HepG2 (cell line): ENCODE measurements at regions of chr12 and their contacts with region 1.

Region 1: DNA sequence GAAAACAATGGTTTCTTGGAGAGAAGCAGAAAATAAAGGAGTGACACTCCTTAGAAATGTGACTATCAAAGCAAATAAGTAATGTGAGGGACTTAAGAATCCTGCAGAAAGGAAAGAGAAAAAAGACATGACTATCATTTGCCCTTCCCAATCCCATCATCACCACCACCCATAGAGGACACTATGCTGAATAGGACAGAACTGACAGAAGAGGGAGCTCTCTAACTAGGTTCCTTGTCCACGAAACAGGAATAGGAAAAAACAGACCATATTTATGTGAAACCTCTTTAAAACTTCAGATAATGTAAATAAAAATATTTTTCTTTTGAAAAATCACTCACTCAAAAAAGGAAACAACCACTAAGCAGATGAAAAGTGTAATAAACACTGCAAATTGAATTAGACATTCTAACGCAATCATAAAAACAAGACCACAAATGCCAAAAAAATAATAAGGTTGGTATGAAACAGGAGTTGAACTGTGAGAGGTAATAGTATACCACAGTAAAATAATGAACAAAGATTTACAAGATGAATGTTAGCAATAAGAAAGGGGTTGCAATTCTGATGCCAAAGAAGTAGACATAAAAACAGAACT is 24.1 kb downstream of the KLRD1 start:
- DNase-seq: peak; percentile 49
- ATAC-seq: peak; percentile 82
- H3K4me3 ChIP-seq: no peak overlapping the region
- H3K27ac ChIP-seq: no peak overlapping the region
- H3K4me1 ChIP-seq: no peaks in the 10 kb centered on the region
- H3K27me3 ChIP-seq: no peaks in the 10 kb centered on the region
- CTCF ChIP-seq: peak; percentile 76
- EP300 ChIP-seq: no peak
- POLR2A ChIP-seq: no peak
- RAD21 ChIP-seq: peak; percentile 53; the same call in 1 of the 2 replicates

Region 2: DNA sequence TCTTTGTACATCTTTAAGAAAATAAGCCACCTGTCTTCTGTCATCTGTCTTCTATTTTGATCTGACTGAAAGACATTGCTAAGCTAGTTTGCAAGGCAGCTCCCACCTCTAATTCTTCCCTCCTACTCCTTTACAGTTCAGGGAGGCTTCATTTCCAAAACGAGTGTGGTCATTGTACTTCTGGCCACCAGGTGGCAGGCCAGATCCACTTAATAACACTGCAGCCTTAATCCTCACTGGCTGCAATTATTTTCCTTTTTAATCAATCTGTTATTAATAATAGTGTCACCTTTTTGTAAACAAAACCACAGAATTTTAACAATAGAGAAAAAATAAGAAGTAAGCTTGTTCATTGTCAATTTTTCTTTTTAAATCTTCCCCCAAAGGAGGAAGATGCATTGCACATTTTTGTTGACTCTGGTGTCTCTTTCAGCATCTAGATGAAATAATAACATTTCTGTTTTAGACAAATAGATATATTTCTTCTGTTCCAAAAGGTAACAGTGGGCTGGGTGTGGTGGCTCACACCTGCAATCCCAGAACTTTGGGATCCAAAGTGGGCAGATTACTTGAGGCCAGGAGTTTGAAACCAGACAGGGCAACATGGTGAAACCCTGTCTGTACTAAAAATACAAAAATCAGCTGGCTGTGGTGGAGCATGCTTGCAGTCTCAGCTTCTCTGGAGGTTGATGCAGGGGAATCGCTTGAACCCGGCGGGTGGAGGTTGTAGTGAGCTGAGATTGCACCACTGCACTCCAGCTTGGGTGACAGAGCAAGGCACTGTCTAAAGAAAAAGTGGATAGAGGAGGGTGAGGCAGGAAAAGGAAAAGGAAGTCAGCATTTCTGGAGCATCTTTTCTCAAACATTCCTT is 95.7 kb before region 1 on chr12:
- CTCF ChIA-PET with region 1: interaction called, 5 read pairs
- POLR2A ChIA-PET with region 1: no interaction called
- in situ Hi-C with region 1: no loop called
- intact Hi-C with region 1: loop called (anchors 5 kb)
- DNase-seq: peak; percentile 17
- ATAC-seq: peak; percentile 67
- H3K4me3 ChIP-seq: no peak overlapping the region
- H3K27ac ChIP-seq: no peak overlapping the region
- H3K4me1 ChIP-seq: no peaks in the 10 kb centered on the region
- H3K27me3 ChIP-seq: 0 out of 5 replicates have a peak, but pooled peaks cover 0 to 1% of the 10 kb centered on the region in 2 experiments
- CTCF ChIP-seq: peak; percentile 81
- EP300 ChIP-seq: no peak
- POLR2A ChIP-seq: no peak
- RAD21 ChIP-seq: 0 out of 2 replicates have a peak, but pooled peaks have one; percentile 37

Region 3: DNA sequence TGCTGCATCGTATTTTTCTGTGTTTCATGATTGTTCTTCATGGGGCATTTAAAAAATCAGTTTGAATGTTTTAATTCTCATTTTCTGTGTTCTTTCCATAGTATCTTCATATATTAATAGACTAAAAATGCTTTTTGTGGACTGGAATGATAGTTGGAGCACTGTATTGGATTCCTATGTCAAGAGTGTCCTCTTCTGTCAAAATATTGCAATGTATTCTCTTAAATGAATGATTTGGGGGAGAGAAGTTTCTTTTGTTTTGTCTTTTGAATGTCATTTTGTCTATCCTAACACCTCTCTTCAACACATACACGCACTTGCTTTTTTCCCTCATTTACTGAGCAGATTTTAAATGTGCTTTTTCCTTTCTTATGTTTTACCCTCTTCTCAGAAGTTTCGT is 169.3 kb after region 1 on chr12:
- CTCF ChIA-PET with region 1: interaction called, 16 read pairs
- POLR2A ChIA-PET with region 1: no interaction called
- in situ Hi-C with region 1: no loop called
- intact Hi-C with region 1: loop called (anchors 1 kb)
- DNase-seq: no peak
- ATAC-seq: no peak
- H3K4me3 ChIP-seq: no peak overlapping the region
- H3K27ac ChIP-seq: no peak overlapping the region
- H3K4me1 ChIP-seq: no peaks in the 10 kb centered on the region
- H3K27me3 ChIP-seq: peaks cover 0 to 2% of the 10 kb centered on the region in 2 experiments; a peak in 1 of 5 replicates
- CTCF ChIP-seq: peak; percentile 35
- EP300 ChIP-seq: no peak
- POLR2A ChIP-seq: no peak
- RAD21 ChIP-seq: no peak

Region 4: DNA sequence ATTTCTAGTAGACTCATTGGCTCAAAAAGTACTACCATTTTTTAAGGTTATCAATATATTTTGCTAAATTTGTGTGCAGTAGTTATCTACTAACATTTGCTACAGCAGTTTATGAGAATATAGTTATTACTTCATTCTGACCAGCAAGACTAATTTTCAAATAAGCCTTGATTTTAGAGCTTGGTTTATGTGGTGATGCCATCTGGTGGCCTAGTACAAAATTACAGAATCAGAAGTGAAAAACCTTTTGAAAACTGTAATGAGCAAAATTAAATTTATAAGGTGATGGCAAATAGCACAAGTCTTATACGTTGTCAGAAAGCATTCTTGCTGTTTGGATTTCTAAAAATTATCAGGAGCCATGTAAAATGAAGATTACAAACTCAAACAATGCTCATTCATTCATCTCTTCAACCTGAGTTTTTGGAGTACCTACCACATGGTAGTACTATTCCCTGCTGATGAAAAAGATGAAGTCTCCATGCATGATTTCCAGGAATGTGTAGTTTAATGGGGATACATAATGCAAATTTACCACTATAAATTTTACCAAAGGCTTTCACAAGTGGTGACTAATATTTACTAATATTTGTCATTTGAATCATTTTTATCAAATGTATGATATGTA is 230.7 kb after region 1 on chr12:
- CTCF ChIA-PET with region 1: interaction called, 39 read pairs
- POLR2A ChIA-PET with region 1: no interaction called
- in situ Hi-C with region 1: loop called (anchors 10 kb)
- intact Hi-C with region 1: loop called (anchors 1 kb)
- DNase-seq: peak; percentile 16
- ATAC-seq: no peak
- H3K4me3 ChIP-seq: no peak overlapping the region
- H3K27ac ChIP-seq: no peak overlapping the region
- H3K4me1 ChIP-seq: no peaks in the 10 kb centered on the region
- H3K27me3 ChIP-seq: 0 out of 5 replicates have a peak, but pooled peaks cover 0 to under 1% of the 10 kb centered on the region in 2 experiments
- CTCF ChIP-seq: peak; percentile 64
- EP300 ChIP-seq: no peak
- POLR2A ChIP-seq: no peak
- RAD21 ChIP-seq: peak; percentile 49; the same call in 1 of the 2 replicates

Region 5: DNA sequence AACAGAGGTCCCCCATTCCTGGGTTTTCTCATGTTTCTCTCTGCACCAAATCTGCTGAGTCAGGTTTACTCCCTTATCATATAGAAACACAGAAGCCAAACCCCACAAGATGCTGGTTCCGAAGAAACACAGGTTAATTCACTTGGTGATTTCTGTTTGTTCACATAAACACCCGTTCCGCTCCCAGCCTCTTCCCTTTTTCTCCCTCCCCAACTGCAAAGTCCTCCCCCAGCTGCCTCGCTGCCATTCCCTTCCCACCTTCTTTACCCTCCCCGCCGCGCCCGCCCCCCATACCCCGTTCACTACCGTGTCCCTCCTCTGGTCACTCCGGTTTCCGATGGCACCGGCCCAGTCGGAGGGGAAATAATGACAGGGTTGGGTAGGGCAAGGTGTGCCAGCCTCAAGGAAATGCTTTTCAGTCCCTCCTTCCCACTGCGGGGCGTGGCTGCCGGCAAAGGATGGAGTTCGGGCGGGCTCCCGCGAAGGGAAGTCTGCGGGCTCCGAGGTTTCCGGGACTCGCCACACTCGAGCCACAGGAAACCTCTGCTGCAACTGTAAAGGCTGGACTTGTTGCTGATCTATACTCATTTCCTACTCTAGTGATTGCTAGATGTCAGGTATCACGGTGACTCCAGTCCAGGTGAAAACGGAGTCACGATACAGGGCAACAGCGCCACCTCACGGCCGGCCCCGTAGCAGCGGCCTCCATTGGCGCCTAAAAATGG is 342.1 kb after region 1 on chr12 and contains the start of gene STYK1:
- CTCF ChIA-PET with region 1: interaction called, 7 read pairs
- POLR2A ChIA-PET with region 1: no interaction called
- in situ Hi-C with region 1: no loop called
- intact Hi-C with region 1: loop called (anchors 2 kb)
- DNase-seq: peak; percentile 20
- ATAC-seq: peak; percentile 83
- H3K4me3 ChIP-seq: peak within 1 kb of the TSS; percentile 20 to 65 (median 27); a peak in 5 of 6 replicates
- H3K27ac ChIP-seq: no peak within 1 kb of the TSS
- H3K4me1 ChIP-seq: peaks cover 7% of the 10 kb centered on the region
- H3K27me3 ChIP-seq: peaks cover 0 to 12% of the 10 kb centered on the region in 2 experiments; a peak in 2 of 5 replicates
- CTCF ChIP-seq: peak; percentile 90
- EP300 ChIP-seq: no peak
- POLR2A ChIP-seq: no peak
- RAD21 ChIP-seq: peak; percentile 54; the same call in 1 of the 2 replicates
- total RNA-seq, gene STYK1: not detected in 2 replicates

Region 6: DNA sequence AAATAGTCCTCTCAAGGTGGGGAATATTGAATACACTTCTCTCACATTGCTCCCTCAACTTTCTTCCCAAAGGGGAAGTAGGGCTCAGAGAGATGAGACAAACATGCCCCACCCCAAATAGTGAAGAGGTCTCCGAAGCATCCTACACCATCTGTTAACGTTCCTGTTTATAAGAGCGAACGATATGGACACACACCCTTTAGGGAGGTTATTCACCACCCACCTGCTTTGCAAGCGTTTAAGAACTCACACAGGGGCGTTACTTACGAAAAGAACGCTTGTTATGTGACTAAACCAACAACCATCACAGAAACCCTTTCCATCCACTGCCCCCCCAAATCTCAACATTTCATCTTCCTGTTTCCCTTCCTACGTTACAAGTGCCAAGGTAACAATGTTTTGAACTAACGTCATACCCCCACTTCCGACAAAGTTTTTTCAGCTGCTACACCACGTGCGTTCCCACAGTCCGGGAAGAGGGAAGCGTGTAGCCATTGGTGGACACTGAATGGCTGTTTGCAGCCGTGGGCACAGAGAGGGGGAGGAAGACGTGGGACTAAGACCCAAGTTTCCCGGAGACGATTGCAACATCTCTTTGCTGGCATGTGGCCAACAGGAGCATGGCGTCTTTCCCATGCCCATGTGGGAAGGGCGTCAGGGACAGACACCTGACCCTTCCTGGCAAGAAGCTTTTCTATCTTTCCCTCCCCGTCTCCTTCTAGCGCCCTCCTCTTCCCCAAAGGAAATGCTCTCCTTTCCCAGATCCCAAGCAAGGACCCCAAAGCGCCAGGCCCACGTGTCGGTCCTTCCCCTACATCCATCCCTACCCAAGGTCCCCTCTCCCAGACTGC is 390.1 kb after region 1 on chr12:
- CTCF ChIA-PET with region 1: no interaction called
- POLR2A ChIA-PET with region 1: no interaction called
- in situ Hi-C with region 1: no loop called
- intact Hi-C with region 1: no loop called
- DNase-seq: peak; percentile 81
- ATAC-seq: peak; percentile 66
- H3K4me3 ChIP-seq: peak overlapping the region; percentile 84 to 99 (median 93)
- H3K27ac ChIP-seq: peak overlapping the region; percentile 80
- H3K4me1 ChIP-seq: peaks cover 54% of the 10 kb centered on the region
- H3K27me3 ChIP-seq: peaks cover 0 to 11% of the 10 kb centered on the region in 2 experiments; a peak in 2 of 5 replicates
- CTCF ChIP-seq: peak; percentile 14; the same call in 1 of the 2 replicates
- EP300 ChIP-seq: 0 out of 4 replicates have a peak, but pooled peaks of 1 of the 2 experiments have one; percentile 24
- POLR2A ChIP-seq: peak; percentile 44; a peak in 2 of 4 replicates
- RAD21 ChIP-seq: no peak